CD8-positive, alpha-beta T cell (primary cell): ENCODE measurements at regions of chr13 and their contacts with region 1.

Region 1: DNA sequence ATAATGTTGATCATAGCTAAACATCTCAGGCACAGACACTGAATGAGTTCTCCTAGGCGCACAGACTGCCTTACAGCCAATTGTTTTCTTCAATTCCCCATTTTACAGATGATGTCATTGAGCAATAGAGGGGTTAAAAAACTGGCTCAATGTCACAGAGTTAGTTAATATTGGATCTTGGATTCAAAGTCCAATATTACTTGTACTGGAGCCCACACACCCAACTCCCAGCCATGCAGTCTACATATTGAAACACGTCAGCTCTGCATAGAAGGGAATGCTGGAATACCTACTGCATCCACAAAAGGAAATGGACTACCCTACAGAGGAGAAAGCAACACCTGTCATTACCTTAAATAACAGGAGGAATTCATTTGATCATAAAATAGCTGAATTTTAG is 76.1 kb upstream of the SLC15A1 start:
- DNase-seq: no peak
- ATAC-seq: no peak
- H3K4me3 ChIP-seq: no peak overlapping the region
- H3K4me3 Mint-ChIP-seq: no peak overlapping the region
- H3K27ac ChIP-seq: no peak overlapping the region
- H3K27ac Mint-ChIP-seq: no peak overlapping the region
- H3K4me1 ChIP-seq: no peaks in the 10 kb centered on the region
- H3K4me1 Mint-ChIP-seq: peaks cover 9% of the 10 kb centered on the region
- H3K27me3 ChIP-seq: no peaks in the 10 kb centered on the region
- H3K27me3 Mint-ChIP-seq: no peaks in the 10 kb centered on the region
- CTCF ChIP-seq: no peak

Region 2: DNA sequence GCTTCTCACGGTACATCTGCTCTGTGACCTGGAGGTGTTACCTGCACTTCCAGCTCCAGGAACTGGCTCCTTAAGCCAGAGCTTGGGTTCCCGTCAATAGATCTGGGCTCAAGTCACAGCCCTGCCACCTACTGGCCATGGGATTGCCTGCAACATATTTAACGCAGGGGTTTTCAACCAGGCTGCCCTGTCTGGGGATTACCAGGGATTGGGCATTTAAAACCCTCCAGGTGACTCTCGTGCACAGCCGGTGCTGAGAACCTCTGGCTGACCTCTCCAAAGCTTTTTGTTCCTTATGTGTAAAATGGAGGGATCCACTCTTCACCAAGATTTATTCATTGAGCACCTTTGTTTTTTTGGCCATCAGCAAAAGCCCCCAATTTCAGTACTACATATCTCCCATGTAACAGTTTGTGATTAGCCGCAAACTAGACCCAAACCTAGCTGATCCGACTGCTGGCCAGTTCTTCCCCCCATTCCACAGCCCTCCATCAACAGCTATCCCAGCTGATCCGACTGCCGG is 175.1 kb before region 1 on chr13:
- CTCF ChIA-PET with region 1: no interaction called
- POLR2A ChIA-PET with region 1: no interaction called
- intact Hi-C with region 1: no loop called
- DNase-seq: peak; percentile 52 to 80 (median 72)
- ATAC-seq: peak; percentile 97
- H3K4me3 ChIP-seq: no peak overlapping the region
- H3K4me3 Mint-ChIP-seq: peak overlapping the region; percentile 78
- H3K27ac ChIP-seq: no peak overlapping the region
- H3K27ac Mint-ChIP-seq: no peak overlapping the region
- H3K4me1 ChIP-seq: peaks cover 3% of the 10 kb centered on the region
- H3K4me1 Mint-ChIP-seq: peaks cover 2% of the 10 kb centered on the region
- H3K27me3 ChIP-seq: no peaks in the 10 kb centered on the region
- H3K27me3 Mint-ChIP-seq: peaks cover 5% of the 10 kb centered on the region
- CTCF ChIP-seq: peak; percentile 78

Region 3: GRCh38 chr13:98813993-98814392 is 14.6 kb before region 1 on chr13:
- CTCF ChIA-PET with region 1: no interaction called
- POLR2A ChIA-PET with region 1: interaction called, 4 read pairs
- intact Hi-C with region 1: loop called in 1 of 2 experiments (anchors 2 kb)
- DNase-seq: no peak
- ATAC-seq: no peak
- H3K4me3 ChIP-seq: no peak overlapping the region
- H3K4me3 Mint-ChIP-seq: no peak overlapping the region
- H3K27ac ChIP-seq: no peak overlapping the region
- H3K27ac Mint-ChIP-seq: no peak overlapping the region
- H3K4me1 ChIP-seq: no peaks in the 10 kb centered on the region
- H3K4me1 Mint-ChIP-seq: no peaks in the 10 kb centered on the region
- H3K27me3 ChIP-seq: no peaks in the 10 kb centered on the region
- H3K27me3 Mint-ChIP-seq: no peaks in the 10 kb centered on the region
- CTCF ChIP-seq: no peak

Region 4: GRCh38 chr13:98998831-98999638 is 170.4 kb after region 1 on chr13:
- CTCF ChIA-PET with region 1: no interaction called
- POLR2A ChIA-PET with region 1: no interaction called
- intact Hi-C with region 1: no loop called
- DNase-seq: peak in 6 of 9 experiments; percentile 12 to 75 (median 32)
- ATAC-seq: peak; percentile 71
- H3K4me3 ChIP-seq: no peak overlapping the region
- H3K4me3 Mint-ChIP-seq: peak overlapping the region; percentile 66
- H3K27ac ChIP-seq: no peak overlapping the region
- H3K27ac Mint-ChIP-seq: peak overlapping the region; percentile 84
- H3K4me1 ChIP-seq: peaks cover 87% of the 10 kb centered on the region
- H3K4me1 Mint-ChIP-seq: peaks cover 96% of the 10 kb centered on the region
- H3K27me3 ChIP-seq: no peaks in the 10 kb centered on the region
- H3K27me3 Mint-ChIP-seq: no peaks in the 10 kb centered on the region
- CTCF ChIP-seq: no peak